B cell (primary cell): ENCODE measurements at regions of chr2 and their contacts with region 1.

Region 1: GRCh38 chr2:160324161-160324800 is 124.2 kb upstream of the ITGB6 start:
- DNase-seq: peak; percentile 55
- ATAC-seq: peak; percentile 14
- H3K4me3 ChIP-seq: no peak overlapping the region
- H3K4me3 Mint-ChIP-seq: no peak overlapping the region
- H3K27ac ChIP-seq: no peak overlapping the region
- H3K27ac Mint-ChIP-seq: no peak overlapping the region
- H3K4me1 ChIP-seq: peaks cover 4 to 14% of the 10 kb centered on the region in 2 donors
- H3K4me1 Mint-ChIP-seq: peaks cover 56% of the 10 kb centered on the region
- H3K27me3 ChIP-seq: no peaks in the 10 kb centered on the region
- H3K27me3 Mint-ChIP-seq: no peaks in the 10 kb centered on the region
- CTCF ChIP-seq: peak; percentile 81

Region 2: DNA sequence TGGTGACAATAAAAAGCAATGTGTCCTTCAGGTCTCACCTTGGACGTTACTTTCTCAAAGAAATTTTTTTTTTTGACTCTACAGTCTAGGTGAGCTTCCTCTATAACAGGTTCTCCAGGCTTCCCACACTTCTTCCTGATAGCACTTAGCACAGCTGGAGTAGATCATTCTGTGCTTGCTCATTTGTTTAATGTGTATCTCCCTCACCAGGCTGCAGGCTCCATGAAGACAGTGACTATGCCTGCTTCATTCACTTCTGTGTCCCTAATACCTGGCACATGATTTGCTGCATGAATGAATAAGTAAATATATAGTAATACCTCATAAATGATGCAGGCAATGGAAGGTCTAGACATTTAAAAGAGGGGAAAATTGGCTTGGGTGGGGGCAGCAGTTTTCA is 416.4 kb before region 1 on chr2:
- CTCF ChIA-PET with region 1: no interaction called
- POLR2A ChIA-PET with region 1: no interaction called
- intact Hi-C with region 1: no loop called
- DNase-seq: no peak
- ATAC-seq: no peak
- H3K4me3 ChIP-seq: no peak overlapping the region
- H3K4me3 Mint-ChIP-seq: no peak overlapping the region
- H3K27ac ChIP-seq: no peak overlapping the region
- H3K27ac Mint-ChIP-seq: no peak overlapping the region
- H3K4me1 ChIP-seq: peaks cover 6 to 15% of the 10 kb centered on the region in 2 donors
- H3K4me1 Mint-ChIP-seq: peaks cover 15% of the 10 kb centered on the region
- H3K27me3 ChIP-seq: no peaks in the 10 kb centered on the region
- H3K27me3 Mint-ChIP-seq: no peaks in the 10 kb centered on the region
- CTCF ChIP-seq: no peak

Region 3: DNA sequence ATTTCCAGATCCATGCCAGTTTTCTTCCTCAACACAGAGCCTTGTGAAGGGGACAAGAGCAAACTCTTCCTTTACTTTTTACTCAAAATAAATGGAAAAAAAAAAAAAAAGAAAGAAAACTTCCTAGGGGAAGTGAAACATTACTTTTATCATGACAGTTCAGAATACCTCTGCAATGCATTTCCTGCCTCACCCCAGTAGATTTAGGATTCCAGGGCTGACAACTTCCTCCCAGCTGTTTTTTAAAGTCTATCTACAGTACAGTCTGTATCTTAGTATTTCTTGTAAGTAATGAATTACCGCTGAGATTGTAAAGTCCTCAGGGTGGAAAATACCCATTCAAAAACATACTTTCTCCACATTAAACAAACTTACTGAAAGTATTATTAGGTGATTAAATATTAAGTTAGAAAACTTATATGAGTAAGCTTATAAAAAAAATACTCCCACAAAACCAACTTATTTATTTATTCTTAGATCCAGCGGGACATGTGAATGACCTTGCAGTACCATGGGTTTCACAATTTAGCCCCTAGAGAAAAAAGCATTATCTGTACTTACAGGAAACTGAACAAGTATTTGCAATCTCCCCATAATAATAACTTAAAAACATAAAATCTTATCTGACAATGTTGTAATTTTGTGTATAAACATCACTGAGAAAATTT is 51.7 kb after region 1 on chr2:
- CTCF ChIA-PET with region 1: interaction called, 11 read pairs
- POLR2A ChIA-PET with region 1: no interaction called
- intact Hi-C with region 1: no loop called
- DNase-seq: peak; percentile 32
- ATAC-seq: peak; percentile 56
- H3K4me3 ChIP-seq: peak overlapping the region in 1 of 5 experiments; percentile 15
- H3K4me3 Mint-ChIP-seq: no peak overlapping the region
- H3K27ac ChIP-seq: peak overlapping the region in 1 of 2 donors; percentile 21
- H3K27ac Mint-ChIP-seq: no peak overlapping the region
- H3K4me1 ChIP-seq: peaks cover 44 to 53% of the 10 kb centered on the region in 2 donors
- H3K4me1 Mint-ChIP-seq: peaks cover 71% of the 10 kb centered on the region
- H3K27me3 ChIP-seq: no peaks in the 10 kb centered on the region
- H3K27me3 Mint-ChIP-seq: no peaks in the 10 kb centered on the region
- CTCF ChIP-seq: no peak

Region 4: GRCh38 chr2:160918906-160919503 is 594.7 kb after region 1 on chr2:
- CTCF ChIA-PET with region 1: interaction called, 10 read pairs
- POLR2A ChIA-PET with region 1: no interaction called
- intact Hi-C with region 1: loop called (anchors 1 kb)
- DNase-seq: peak; percentile 5
- ATAC-seq: no peak
- H3K4me3 ChIP-seq: no peak overlapping the region
- H3K4me3 Mint-ChIP-seq: no peak overlapping the region
- H3K27ac ChIP-seq: no peak overlapping the region
- H3K27ac Mint-ChIP-seq: no peak overlapping the region
- H3K4me1 ChIP-seq: no peaks in the 10 kb centered on the region
- H3K4me1 Mint-ChIP-seq: no peaks in the 10 kb centered on the region
- H3K27me3 ChIP-seq: no peaks in the 10 kb centered on the region
- H3K27me3 Mint-ChIP-seq: peaks cover 20% of the 10 kb centered on the region
- CTCF ChIP-seq: peak; percentile 32

Region 5: GRCh38 chr2:160994141-160995002 is 670.1 kb after region 1 on chr2:
- CTCF ChIA-PET with region 1: interaction called, 208 read pairs
- POLR2A ChIA-PET with region 1: no interaction called
- intact Hi-C with region 1: loop called (anchors 1 kb)
- DNase-seq: peak; percentile 81
- ATAC-seq: peak; percentile 68
- H3K4me3 ChIP-seq: no peak overlapping the region
- H3K4me3 Mint-ChIP-seq: no peak overlapping the region
- H3K27ac ChIP-seq: no peak overlapping the region
- H3K27ac Mint-ChIP-seq: no peak overlapping the region
- H3K4me1 ChIP-seq: peaks cover 0 to 3% of the 10 kb centered on the region in 2 donors
- H3K4me1 Mint-ChIP-seq: peaks cover 2% of the 10 kb centered on the region
- H3K27me3 ChIP-seq: no peaks in the 10 kb centered on the region
- H3K27me3 Mint-ChIP-seq: no peaks in the 10 kb centered on the region
- CTCF ChIP-seq: peak; percentile 90